PC-3 (cell line): ENCODE measurements at regions of chr3 and their contacts with region 1.

Region 1: GRCh38 chr3:157088601-157089454 is 71.1 kb downstream of the CCNL1 start:
- DNase-seq: peak; percentile 93
- ATAC-seq: peak; percentile 84
- H3K4me3 ChIP-seq: peak overlapping the region; percentile 70
- H3K27ac ChIP-seq: peak overlapping the region; percentile 98
- H3K4me1 ChIP-seq: peaks cover 41% of the 10 kb centered on the region
- H3K27me3 ChIP-seq: no peaks in the 10 kb centered on the region
- CTCF ChIP-seq: peak; percentile 14; the same call in 1 of the 2 replicates

Region 2: GRCh38 chr3:156952011-156952410 is 136.8 kb before region 1 on chr3:
- CTCF ChIA-PET with region 1: no interaction called
- POLR2A ChIA-PET with region 1: no interaction called
- intact Hi-C with region 1: no loop called
- DNase-seq: no peak
- ATAC-seq: no peak
- H3K4me3 ChIP-seq: no peak overlapping the region
- H3K27ac ChIP-seq: no peak overlapping the region
- H3K4me1 ChIP-seq: no peaks in the 10 kb centered on the region
- H3K27me3 ChIP-seq: no peaks in the 10 kb centered on the region
- CTCF ChIP-seq: no peak

Region 3: GRCh38 chr3:157077565-157077991 is 11.2 kb before region 1 on chr3:
- CTCF ChIA-PET with region 1: no interaction called
- POLR2A ChIA-PET with region 1: no interaction called
- intact Hi-C with region 1: no loop called
- DNase-seq: no peak
- ATAC-seq: no peak
- H3K4me3 ChIP-seq: no peak overlapping the region
- H3K27ac ChIP-seq: no peak overlapping the region
- H3K4me1 ChIP-seq: peaks cover 29% of the 10 kb centered on the region
- H3K27me3 ChIP-seq: no peaks in the 10 kb centered on the region
- CTCF ChIP-seq: 0 out of 2 replicates have a peak, but pooled peaks have one; percentile 24

Region 4: DNA sequence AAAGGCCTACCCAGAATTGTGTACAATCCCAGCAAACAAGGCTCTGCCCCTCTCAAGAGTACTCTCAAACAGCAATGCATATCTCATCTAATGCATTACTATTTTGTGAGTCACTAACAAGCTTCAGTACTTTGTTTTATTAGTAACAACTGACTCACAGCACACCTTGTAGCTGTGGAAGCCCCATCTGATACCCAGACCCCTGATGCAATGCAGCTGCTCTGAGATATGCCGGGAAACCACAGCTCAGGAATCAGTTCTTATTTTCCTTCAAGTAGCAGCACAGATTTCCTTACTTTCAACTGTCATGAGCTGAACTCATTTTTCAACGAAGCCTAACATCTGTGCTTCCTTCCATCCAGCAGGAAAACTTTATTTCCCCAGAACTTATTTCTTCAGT is 33.3 kb after region 1 on chr3:
- CTCF ChIA-PET with region 1: interaction called, 3 read pairs
- POLR2A ChIA-PET with region 1: interaction called, 23 read pairs
- intact Hi-C with region 1: no loop called
- DNase-seq: peak; percentile 93
- ATAC-seq: peak; percentile 75
- H3K4me3 ChIP-seq: no peak overlapping the region
- H3K27ac ChIP-seq: peak overlapping the region; percentile 72
- H3K4me1 ChIP-seq: peaks cover 72% of the 10 kb centered on the region
- H3K27me3 ChIP-seq: no peaks in the 10 kb centered on the region
- CTCF ChIP-seq: no peak

Region 5: DNA sequence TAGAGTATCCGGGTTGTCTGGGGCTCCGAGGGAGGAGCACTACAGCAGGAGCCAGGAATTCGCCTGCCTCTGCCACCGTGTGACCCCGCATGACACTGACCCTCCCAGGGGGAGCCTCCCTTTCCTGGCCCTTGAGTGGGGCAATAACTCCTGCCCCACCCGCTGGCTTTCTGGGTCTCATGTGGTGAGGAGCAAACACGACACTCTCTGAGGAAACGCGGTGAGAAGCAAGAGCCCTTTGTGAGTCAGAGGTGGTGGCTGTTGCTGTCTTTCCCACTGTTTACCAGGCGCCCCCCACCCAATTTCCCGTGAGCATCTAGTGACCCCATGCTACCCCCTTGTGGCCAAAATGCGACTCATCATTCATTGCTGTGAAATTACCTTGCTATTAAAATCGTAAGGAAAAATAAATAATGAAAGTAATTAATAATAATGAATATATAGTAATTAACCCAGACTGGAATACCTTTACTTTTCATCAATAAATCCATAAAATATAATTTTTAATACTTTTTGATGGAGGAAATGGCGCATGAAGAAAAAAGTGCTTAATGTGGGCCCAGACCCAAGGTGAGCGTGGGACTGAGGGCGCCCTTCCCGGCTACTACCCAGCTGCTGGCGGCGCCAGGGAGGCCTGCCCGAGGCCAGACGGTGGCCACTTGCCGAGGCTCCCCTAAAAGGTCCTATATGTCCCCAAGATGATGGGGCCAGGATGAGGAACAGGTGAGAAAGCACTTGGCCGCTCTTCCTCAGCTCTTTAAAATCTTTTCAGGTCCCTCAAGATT is 41.8 kb after region 1 on chr3:
- CTCF ChIA-PET with region 1: interaction called, 7 read pairs
- POLR2A ChIA-PET with region 1: interaction called, 20 read pairs
- intact Hi-C with region 1: loop called (anchors 1 kb)
- DNase-seq: peak; percentile 95
- ATAC-seq: peak; percentile 49
- H3K4me3 ChIP-seq: peak overlapping the region; percentile 33; the same call in 1 of the 2 replicates
- H3K27ac ChIP-seq: peak overlapping the region; percentile 99
- H3K4me1 ChIP-seq: peaks cover 98% of the 10 kb centered on the region
- H3K27me3 ChIP-seq: no peaks in the 10 kb centered on the region
- CTCF ChIP-seq: peak; percentile 76